Left cardiac atrium (tissue), 4 donors: ENCODE measurements at regions of chr12 and their contacts with region 1.

Region 1: GRCh38 chr12:13864081-13864673 is 117.2 kb downstream of the GRIN2B start:
- DNase-seq: peak; percentile 84
- ATAC-seq: peak; percentile 77 to 84

Region 2: GRCh38 chr12:13745111-13745685 is 119.0 kb before region 1 on chr12:
- intact Hi-C with region 1: loop called in 1 of 2 experiments (anchors 10 kb)
- DNase-seq: no peak
- ATAC-seq: no peak

Region 3: GRCh38 chr12:14157088-14157747 is 293.0 kb after region 1 on chr12:
- intact Hi-C with region 1: loop called in 1 of 2 experiments (anchors 5 kb)
- DNase-seq: no peak
- ATAC-seq: no peak